MCF 10A (cell line): ENCODE measurements at regions of chr5 and their contacts with region 1.

Region 1: DNA sequence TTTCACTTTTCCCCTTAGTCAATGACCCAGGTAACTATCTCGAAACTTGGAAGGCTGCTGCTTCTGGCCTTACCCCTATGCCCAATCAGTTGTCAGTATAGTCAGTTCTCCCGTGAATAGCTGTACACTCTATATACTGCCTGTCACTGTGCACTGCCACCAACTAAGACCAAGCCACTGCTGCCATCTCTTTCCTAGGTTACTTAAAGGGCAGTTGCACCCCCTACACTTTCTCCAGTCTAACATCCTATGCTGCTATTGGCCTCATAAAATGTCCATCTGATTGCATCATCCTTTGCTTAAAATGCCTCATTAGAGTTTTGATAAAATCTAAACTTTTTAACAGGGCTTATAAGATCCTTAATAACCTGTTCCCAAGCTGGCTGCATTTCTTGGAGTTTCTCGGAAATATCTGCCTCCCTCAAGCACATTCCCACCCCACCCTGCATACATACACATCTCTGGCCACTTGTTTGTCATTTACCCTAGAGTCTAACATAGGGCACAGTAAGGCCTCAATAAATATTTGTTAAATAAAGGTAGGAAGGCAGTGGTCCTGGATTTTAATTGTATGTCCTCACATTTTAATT is 32.8 kb upstream of the TNFAIP8 start:
- DNase-seq: peak; percentile 54
- H3K4me3 Mint-ChIP-seq: no peak overlapping the region
- H3K27ac Mint-ChIP-seq: peak overlapping the region; percentile 98
- H3K4me1 Mint-ChIP-seq: peaks cover 44% of the 10 kb centered on the region
- H3K27me3 Mint-ChIP-seq: no peaks in the 10 kb centered on the region
- CTCF ChIP-seq: no peak

Region 2: GRCh38 chr5:119009131-119009530 is 313.9 kb before region 1 on chr5:
- CTCF ChIA-PET with region 1: no interaction called
- POLR2A ChIA-PET with region 1: no interaction called
- intact Hi-C with region 1: no loop called
- DNase-seq: no peak
- H3K4me3 Mint-ChIP-seq: no peak overlapping the region
- H3K27ac Mint-ChIP-seq: no peak overlapping the region
- H3K4me1 Mint-ChIP-seq: no peaks in the 10 kb centered on the region
- H3K27me3 Mint-ChIP-seq: no peaks in the 10 kb centered on the region
- CTCF ChIP-seq: no peak

Region 3: DNA sequence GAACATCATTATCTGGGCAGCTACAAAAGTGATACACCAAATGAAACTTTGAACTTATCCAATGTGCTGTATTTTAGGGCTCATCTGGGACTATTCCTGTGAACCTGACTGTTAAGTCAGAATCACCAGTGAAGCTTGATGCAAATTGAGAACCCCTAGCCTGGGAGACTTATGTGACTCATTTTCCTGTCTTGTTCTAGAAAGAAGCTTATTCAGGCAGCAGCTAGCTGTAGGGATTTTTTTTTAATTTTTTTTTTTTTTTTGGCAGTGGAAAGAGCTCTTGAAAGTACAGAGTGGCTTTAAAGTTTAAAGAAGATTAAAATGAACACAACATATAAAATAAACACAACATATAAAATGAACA is 48.3 kb before region 1 on chr5:
- CTCF ChIA-PET with region 1: interaction called, 6 read pairs
- POLR2A ChIA-PET with region 1: interaction called, 41 read pairs
- intact Hi-C with region 1: no loop called
- DNase-seq: peak; percentile 80
- H3K4me3 Mint-ChIP-seq: no peak overlapping the region
- H3K27ac Mint-ChIP-seq: peak overlapping the region; percentile 80
- H3K4me1 Mint-ChIP-seq: peaks cover 35% of the 10 kb centered on the region
- H3K27me3 Mint-ChIP-seq: no peaks in the 10 kb centered on the region
- CTCF ChIP-seq: no peak

Region 4: DNA sequence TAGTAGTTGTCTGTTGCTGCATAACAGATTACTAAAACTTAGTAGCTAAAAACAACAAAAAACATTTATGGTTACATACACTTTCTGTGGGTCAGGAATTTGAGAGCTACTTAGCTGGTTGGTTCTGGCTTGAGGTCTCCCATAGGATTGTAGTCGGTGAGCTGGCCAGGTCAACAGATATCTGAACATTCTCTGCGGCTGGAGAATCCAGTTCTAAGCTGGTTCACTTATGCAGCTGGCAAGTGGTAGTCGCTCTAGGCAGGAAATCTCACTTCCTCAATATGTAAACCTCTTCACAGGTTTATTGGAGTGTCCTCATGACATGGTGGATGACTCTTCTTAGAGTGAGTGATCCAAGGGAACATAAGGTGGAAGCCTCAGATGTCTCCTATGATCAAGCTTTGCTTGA is 32.9 kb before region 1 on chr5:
- CTCF ChIA-PET with region 1: interaction called, 5 read pairs
- POLR2A ChIA-PET with region 1: interaction called, 29 read pairs
- intact Hi-C with region 1: no loop called
- DNase-seq: no peak
- H3K4me3 Mint-ChIP-seq: no peak overlapping the region
- H3K27ac Mint-ChIP-seq: no peak overlapping the region
- H3K4me1 Mint-ChIP-seq: peaks cover 42% of the 10 kb centered on the region
- H3K27me3 Mint-ChIP-seq: no peaks in the 10 kb centered on the region
- CTCF ChIP-seq: no peak

Region 5: GRCh38 chr5:119397518-119398380 is 74.7 kb after region 1 on chr5:
- CTCF ChIA-PET with region 1: interaction called, 7 read pairs
- POLR2A ChIA-PET with region 1: interaction called, 15 read pairs
- intact Hi-C with region 1: no loop called
- DNase-seq: peak; percentile 87
- H3K4me3 Mint-ChIP-seq: peak overlapping the region; percentile 63
- H3K27ac Mint-ChIP-seq: peak overlapping the region; percentile 94
- H3K4me1 Mint-ChIP-seq: peaks cover 48% of the 10 kb centered on the region
- H3K27me3 Mint-ChIP-seq: no peaks in the 10 kb centered on the region
- CTCF ChIP-seq: no peak